PC-3 (cell line): ENCODE measurements at regions of chr14 and their contacts with region 1.

Region 1: DNA sequence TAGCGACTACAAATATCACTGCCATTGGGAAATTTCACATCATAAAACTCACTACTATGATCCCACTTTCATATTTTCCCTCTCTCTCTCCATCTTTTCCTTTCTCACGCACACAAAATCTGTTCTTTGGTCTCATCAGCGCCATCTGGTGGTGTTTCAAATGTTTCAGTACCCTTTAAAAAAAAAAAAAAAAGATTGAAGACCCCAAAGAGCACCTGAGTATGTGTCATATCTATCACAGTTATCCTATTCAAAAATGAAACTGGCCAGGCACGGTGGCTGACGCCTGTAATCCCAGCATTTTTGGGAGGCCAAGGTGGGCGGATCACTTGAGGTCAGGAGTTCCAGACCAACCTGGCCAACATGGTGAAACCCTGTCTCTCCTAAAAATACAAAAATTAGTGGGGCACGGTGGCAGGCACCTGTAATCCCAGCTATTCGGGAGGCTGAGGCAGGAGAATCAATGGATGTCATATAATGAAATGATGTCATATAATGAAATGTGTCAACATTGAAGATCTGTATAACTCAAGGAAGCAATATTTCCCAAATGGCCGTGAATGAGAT is 72.4 kb downstream of the TTC9 start:
- DNase-seq: peak; percentile 73
- ATAC-seq: peak; percentile 30; the same call in 1 of the 2 replicates
- H3K4me3 ChIP-seq: no peak overlapping the region
- H3K27ac ChIP-seq: no peak overlapping the region
- H3K4me1 ChIP-seq: peaks cover 24% of the 10 kb centered on the region
- H3K27me3 ChIP-seq: no peaks in the 10 kb centered on the region
- CTCF ChIP-seq: peak; percentile 88

Region 2: DNA sequence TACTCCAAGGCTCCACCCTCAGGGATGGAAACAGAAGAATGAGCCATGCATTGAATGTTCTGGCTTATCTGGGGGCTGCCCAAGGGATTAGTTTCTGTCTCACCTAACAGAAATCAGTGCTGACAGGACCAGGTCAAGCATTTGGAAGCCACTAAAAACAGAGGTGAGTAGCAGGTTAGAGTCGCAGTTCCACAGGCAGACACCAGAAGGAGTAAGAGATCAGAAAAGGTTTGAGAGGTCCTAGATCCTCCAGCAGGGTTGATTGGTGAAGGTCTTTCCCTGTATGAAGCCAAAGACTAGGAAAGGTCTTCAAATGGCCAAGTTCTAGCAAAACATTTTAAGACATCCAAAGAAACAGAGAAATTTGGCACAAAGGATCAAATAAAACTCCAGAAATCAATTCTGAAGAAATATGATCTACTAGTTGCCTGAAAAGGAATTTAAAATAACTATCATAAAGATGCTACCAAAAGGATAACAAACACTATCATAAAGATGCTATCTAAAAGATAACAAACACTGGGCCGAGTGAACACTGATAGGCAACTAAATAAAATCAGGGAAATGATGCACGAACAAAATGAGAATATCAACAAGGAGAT is 91.9 kb before region 1 on chr14:
- CTCF ChIA-PET with region 1: interaction called, 4 read pairs
- POLR2A ChIA-PET with region 1: no interaction called
- intact Hi-C with region 1: loop called (anchors 1 kb)
- DNase-seq: peak; percentile 82
- ATAC-seq: peak; percentile 99
- H3K4me3 ChIP-seq: no peak overlapping the region
- H3K27ac ChIP-seq: no peak overlapping the region
- H3K4me1 ChIP-seq: peaks cover 5% of the 10 kb centered on the region; the same call in 1 of the 2 replicates
- H3K27me3 ChIP-seq: no peaks in the 10 kb centered on the region
- CTCF ChIP-seq: peak; percentile 94

Region 3: GRCh38 chr14:70665191-70665916 is 48.8 kb before region 1 on chr14:
- CTCF ChIA-PET with region 1: no interaction called
- POLR2A ChIA-PET with region 1: no interaction called
- intact Hi-C with region 1: loop called (anchors 5 kb)
- DNase-seq: peak; percentile 94
- ATAC-seq: peak; percentile 76
- H3K4me3 ChIP-seq: peak overlapping the region; percentile 18; the same call in 1 of the 2 replicates
- H3K27ac ChIP-seq: peak overlapping the region; percentile 91
- H3K4me1 ChIP-seq: peaks cover 27% of the 10 kb centered on the region
- H3K27me3 ChIP-seq: no peaks in the 10 kb centered on the region
- CTCF ChIP-seq: no peak

Region 4: DNA sequence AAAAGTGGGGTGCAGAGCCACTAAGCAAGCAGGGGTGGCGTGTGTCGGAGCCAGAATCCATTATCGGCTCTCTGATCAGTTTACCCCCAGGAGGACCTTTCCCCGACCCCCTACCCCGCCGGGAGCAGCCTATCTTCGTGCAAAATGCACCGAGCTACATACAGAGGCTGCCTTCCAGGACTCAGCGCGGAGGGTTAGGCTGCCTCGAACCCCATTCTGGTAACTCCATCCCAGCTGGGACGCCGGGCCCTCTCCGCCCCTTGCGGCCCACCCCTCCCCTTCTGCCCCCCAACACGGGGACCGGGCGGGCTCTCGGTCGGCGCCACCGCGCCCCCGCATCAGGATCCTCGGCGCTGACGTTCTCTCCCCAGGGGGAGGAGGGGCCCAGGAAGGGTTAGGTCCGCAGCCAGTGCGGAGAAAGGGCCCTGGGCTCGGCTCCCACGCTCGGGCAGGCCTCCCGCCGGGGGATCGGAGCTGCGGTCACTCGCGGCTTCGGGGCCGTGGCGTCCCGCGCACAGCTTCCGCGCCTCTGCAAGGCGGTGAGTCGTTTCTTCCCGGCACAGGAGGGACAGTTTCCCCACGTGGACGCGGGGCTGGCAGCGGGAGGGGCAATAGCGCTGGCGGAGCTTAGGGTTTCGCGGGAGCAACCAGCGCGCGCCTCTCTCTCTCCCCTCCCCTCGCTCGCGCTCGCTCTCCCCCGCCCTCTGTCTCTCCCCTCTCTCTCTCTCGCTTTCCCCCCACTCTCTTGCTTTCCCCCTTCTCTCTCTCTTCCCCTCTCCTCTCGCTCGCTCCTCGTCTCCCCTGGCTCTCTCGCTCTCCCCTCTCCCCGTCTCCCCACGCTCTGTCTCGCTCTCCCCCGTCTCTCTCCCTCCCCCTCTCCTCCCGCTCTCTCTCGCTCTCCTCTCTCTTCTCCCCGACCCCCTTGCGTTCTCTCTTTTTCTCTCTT is 107.7 kb after region 1 on chr14:
- CTCF ChIA-PET with region 1: interaction called, 4 read pairs
- POLR2A ChIA-PET with region 1: no interaction called
- intact Hi-C with region 1: loop called (anchors 1 kb)
- DNase-seq: peak; percentile 41
- ATAC-seq: peak; percentile 44
- H3K4me3 ChIP-seq: peak overlapping the region; percentile 76
- H3K27ac ChIP-seq: no peak overlapping the region
- H3K4me1 ChIP-seq: peaks cover 23% of the 10 kb centered on the region
- H3K27me3 ChIP-seq: no peaks in the 10 kb centered on the region
- CTCF ChIP-seq: no peak

Region 5: DNA sequence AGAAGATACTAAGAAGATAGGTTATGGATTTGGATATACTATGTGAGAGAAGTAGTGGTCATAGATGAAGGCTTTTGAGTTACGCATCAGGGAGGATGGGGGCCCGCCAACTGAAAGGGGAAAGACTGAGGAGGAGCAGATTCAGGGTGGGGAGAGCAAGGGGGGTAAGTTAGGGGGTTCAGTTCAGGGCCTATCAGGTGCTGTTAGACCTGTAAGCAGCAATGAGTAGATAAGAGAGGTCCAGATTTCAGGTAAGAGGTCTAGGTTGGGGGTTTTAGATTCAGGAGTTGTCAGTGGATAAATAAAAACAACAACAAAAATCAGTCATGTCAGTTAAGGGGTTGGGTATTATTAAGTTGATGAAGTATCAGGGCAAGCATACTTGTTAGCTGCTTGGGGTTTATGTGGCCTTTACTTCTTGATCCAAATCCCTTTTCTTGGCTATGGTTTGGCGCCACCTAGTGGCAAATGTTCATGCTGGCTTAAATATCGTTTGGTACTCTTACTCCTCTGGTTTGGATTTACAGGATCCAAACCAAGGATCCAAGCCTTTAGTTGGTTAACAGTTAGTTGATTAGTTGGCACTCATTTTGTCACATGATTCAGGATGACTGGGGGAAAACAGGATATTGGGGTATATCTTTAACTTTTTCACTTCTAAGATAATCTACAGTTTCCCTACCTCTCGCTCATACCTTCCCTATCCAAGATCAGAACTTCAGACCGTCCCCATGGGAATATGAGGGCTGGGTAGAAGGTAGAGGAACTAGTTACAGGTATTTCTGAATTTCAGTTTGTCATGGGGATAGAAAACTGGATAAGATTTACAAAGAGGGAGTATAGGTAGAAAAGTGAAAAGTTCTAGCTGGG is 258.2 kb after region 1 on chr14:
- CTCF ChIA-PET with region 1: no interaction called
- POLR2A ChIA-PET with region 1: no interaction called
- intact Hi-C with region 1: loop called (anchors 10 kb)
- DNase-seq: peak; percentile 93
- ATAC-seq: peak; percentile 96
- H3K4me3 ChIP-seq: no peak overlapping the region
- H3K27ac ChIP-seq: no peak overlapping the region
- H3K4me1 ChIP-seq: no peaks in the 10 kb centered on the region
- H3K27me3 ChIP-seq: no peaks in the 10 kb centered on the region
- CTCF ChIP-seq: peak; percentile 97